ENCODE measurements at regions of chr1 and their contacts with region 1.

Region 1: GRCh38 chr1:172180501-172181285 is 239.8 kb upstream of the C1orf105 start:
- DNase-seq: peak; percentile 84
- H3K4me3 Mint-ChIP-seq: peak overlapping the region; percentile 82
- H3K27ac Mint-ChIP-seq: peak overlapping the region; percentile 96
- H3K4me1 Mint-ChIP-seq: peaks cover 38% of the 10 kb centered on the region
- H3K27me3 Mint-ChIP-seq: no peaks in the 10 kb centered on the region

Region 2: GRCh38 chr1:172117800-172118199 is 62.9 kb before region 1 on chr1:
- intact Hi-C with region 1: loop called (anchors 1 kb)
- DNase-seq: peak; percentile 86
- H3K4me3 Mint-ChIP-seq: peak overlapping the region; percentile 52
- H3K27ac Mint-ChIP-seq: peak overlapping the region; percentile 64
- H3K4me1 Mint-ChIP-seq: peaks cover 21% of the 10 kb centered on the region
- H3K27me3 Mint-ChIP-seq: no peaks in the 10 kb centered on the region

Region 3: GRCh38 chr1:172154551-172154950 is 26.1 kb before region 1 on chr1:
- intact Hi-C with region 1: loop called (anchors 1 kb)
- DNase-seq: no peak
- H3K4me3 Mint-ChIP-seq: peak overlapping the region; percentile 66
- H3K27ac Mint-ChIP-seq: peak overlapping the region; percentile 95
- H3K4me1 Mint-ChIP-seq: peaks cover 9% of the 10 kb centered on the region
- H3K27me3 Mint-ChIP-seq: no peaks in the 10 kb centered on the region

Region 4: DNA sequence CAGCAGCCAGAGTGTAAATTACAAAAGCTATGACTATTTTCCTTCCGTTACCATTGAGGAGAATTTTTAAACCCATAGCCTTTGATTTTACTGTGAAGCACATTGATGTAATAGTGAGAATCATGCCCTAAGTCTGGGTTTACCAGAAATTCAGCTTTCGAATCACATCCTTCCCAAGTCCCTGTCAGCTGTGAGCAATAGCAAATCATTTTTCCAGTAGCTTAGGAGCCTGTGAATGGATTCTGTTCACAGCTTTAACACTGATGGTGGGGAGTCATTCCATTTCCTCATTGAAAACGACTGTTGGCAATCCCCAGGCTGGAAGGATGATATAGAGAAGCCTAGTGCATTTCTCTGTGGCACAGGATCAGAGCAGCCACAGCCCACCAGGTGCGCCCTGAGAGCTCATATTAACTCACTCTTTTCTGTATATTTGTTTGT is 157.6 kb after region 1 on chr1:
- intact Hi-C with region 1: loop called (anchors 1 kb)
- DNase-seq: peak; percentile 72
- H3K4me3 Mint-ChIP-seq: peak overlapping the region; percentile 16
- H3K27ac Mint-ChIP-seq: peak overlapping the region; percentile 51
- H3K4me1 Mint-ChIP-seq: peaks cover 36% of the 10 kb centered on the region
- H3K27me3 Mint-ChIP-seq: no peaks in the 10 kb centered on the region

Region 5: DNA sequence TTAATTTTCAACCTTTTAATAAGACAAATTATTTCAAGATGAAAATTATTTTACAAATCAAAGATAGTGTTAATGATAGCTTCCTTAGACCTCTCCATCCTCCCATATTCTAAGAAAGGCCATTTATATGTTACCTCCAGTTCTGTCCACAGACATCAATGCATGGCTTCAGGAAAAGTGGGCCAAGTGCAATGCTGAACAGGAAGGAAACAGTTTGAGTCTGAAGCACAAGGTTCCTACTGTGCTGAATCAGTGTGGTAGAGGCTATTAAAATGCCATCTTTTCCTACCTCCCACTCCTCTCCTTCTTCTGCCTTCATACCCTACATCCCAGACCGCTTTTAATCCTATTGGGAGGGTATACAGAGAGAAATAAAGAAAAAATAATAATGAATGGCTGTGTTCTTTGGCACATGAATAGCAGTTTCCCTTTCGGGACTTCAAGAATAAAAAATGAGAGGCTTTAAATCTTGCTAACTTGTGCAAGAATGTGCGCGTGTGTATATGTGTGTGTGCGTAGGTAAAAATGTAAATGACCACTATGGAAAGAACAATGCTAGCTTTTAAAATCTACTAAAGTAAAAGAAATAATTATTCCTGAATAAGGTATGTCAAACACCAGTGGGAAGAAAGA is 177.2 kb after region 1 on chr1:
- intact Hi-C with region 1: loop called (anchors 1 kb)
- DNase-seq: no peak
- H3K4me3 Mint-ChIP-seq: peak overlapping the region; percentile 7
- H3K27ac Mint-ChIP-seq: peak overlapping the region; percentile 84
- H3K4me1 Mint-ChIP-seq: peaks cover 45% of the 10 kb centered on the region
- H3K27me3 Mint-ChIP-seq: no peaks in the 10 kb centered on the region

Measured in activated CD4-positive, alpha-beta T cell treated with anti-CD3 and anti-CD28 coated beads, Interleukin-2, amount 10 ng/mL, durations not matched to agents 24 days and 14 days (primary cell).